ENCODE measurements at regions of chr2 and their contacts with region 1.

Region 1: DNA sequence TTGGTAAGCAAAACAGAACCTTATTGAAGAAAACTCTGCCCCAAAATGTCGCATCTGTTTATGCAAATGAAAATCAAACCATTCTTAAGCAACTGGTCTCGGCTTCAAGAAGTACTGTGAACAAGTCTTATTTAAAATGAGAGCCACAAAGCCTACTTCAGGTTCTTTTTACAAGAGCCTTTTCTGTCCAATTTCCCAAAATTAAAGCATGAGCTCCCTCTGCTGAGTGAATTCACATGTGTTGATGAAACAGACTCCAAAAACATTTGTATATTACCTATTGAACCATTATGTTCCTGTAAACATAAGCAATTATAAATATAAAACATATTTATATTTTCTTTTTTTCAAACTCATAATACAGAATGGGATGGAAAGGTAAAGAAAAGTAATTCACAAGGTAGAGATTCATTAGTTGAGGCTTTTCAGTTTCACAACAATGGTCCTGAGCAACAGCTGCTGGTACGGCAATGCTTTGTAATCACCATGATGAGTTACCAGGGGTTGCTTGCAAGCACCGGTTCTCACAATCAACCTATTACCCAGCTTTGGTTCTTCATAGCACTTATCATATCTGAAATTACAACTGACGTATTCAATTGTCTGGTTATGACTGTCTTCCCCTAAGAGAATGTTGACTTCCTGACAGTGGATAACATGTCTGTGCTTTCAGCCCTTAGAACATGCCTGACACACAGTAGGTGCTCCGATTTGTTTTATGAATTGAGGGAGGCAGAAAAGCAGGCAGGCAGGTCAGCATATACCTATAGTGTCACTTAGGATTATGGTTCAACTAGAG is 108.4 kb upstream of the BZW1 start:
- DNase-seq: peak; percentile 68
- H3K4me3 Mint-ChIP-seq: peak overlapping the region; percentile 19
- H3K27ac Mint-ChIP-seq: peak overlapping the region; percentile 83
- H3K4me1 Mint-ChIP-seq: peaks cover 55% of the 10 kb centered on the region
- H3K27me3 Mint-ChIP-seq: peaks cover 1% of the 10 kb centered on the region

Region 2: DNA sequence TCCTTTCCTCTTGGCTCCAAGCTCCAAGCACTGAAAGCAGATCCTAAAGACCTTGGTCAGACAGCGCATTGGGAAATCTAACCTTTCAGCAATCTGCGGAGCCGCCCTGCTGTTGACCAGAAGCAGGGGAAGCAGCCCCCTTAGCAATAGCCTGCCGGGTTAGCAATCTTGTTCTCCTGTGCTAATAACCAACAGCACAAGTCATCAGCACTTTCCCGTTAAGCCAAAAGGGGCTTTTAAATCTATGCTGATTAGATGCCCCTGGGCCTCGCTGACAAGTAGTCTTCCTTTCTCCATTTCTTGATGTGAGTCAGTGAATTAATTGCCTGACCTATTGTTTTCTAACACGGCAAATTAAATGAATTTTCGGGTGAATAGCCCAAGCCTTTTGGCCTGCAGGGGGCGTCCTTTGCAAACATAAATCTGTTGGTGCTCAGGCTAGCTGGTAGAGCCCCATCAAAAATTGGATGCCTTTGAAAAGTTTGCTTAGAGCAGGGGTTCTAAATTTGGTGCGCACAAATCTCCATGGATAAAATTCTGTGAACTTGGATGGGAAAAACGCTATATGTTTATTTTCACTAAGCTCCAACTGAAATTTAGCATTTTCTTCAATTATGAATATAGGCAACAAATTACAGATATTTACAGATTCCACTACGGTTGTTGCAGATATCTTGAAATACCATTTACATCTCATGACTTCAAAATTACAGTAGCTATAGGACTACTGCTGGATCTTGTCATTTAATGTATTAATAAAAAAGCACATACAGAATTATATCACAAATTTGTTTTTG is 723.3 kb before region 1 on chr2:
- CTCF ChIA-PET with region 1: interaction called, 3 read pairs
- intact Hi-C with region 1: loop called (anchors 1 kb)
- DNase-seq: peak; percentile 92
- H3K4me3 Mint-ChIP-seq: no peak overlapping the region
- H3K27ac Mint-ChIP-seq: peak overlapping the region; percentile 14
- H3K4me1 Mint-ChIP-seq: peaks cover 22% of the 10 kb centered on the region
- H3K27me3 Mint-ChIP-seq: no peaks in the 10 kb centered on the region

Region 3: DNA sequence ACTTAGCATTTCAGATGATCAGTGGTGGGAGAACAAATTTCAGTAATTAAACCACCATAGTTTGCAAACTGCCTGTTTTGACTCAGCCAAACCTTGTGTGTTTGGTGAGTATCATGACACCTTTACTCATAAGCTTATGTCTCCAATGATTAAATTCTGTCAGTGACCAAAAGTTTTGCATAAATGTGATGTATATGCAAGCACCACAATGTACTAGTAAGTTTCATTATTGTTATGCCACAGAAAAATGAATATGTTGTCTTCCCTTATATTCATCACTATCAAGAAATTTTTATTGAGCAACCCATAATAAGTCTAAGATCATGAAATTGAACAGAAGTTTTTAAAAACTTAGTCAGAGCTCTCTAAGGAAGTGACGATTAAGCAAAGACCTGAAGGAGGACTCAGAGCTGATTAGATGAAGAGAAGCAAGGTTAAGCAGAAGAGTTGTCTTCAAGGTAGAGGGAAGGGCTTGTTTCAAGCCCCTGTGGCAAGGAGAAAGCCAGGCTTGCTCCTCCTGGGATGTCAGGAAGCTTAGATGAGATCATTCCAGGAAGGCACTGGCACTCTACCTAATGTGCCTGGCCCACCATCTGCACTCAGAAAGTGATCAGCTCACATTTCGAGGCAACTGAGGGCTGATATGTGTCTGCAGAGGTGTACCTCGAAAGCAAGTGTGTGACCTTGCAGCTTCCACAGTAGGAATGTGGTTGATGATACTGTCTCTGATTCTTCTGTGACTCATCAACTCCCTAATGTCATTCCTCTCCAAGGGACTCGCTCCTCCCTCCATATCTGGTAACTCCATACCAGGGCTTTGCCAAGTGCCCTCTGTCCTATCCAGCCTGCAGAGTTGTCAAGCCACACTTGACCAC is 248.2 kb before region 1 on chr2:
- CTCF ChIA-PET with region 1: no interaction called
- intact Hi-C with region 1: loop called (anchors 1 kb)
- DNase-seq: no peak
- H3K4me3 Mint-ChIP-seq: no peak overlapping the region
- H3K27ac Mint-ChIP-seq: peak overlapping the region; percentile 73
- H3K4me1 Mint-ChIP-seq: peaks cover 30% of the 10 kb centered on the region
- H3K27me3 Mint-ChIP-seq: no peaks in the 10 kb centered on the region

Region 4: DNA sequence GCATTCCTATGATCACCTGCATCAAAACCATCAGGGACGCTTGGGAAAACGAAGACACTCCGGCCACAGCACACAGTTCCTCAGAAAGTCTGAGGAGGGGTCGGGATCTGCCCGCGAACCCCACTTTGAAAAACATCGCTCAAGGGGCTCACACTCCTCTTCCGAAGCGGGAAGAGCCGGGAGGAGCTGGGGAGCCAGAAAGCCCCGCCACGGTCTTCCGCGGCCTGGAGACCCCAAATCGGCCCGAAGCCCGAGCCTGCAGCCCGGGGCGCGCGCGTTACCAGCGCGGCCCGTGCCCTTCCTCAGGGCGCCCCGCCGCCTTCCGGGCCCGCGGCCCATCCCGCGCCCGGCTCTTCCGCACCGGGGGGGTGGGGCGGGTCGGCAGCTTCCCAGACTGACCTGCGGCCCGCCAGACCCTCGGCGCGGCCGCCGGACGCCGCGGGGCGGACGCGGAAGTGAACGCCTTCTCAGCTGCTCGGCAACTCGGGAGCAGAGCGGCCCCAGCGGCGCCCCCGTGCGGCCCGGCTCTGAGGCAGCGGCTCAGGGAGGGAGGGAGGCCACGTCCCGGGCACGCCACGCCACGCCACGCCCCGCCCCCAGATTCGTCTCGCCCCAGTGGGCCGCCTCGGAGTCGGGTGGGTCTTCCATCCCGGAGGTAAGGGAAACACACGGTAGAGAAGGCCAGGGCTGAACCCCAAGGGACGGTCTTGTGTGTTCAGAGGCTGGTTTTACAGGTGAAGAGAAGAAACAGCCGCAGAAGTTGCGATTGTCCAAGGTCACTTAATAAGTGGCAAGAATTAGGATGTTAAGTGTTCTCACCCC is 193.5 kb before region 1 on chr2 and contains the start of gene KCTD18:
- CTCF ChIA-PET with region 1: interaction called, 3 read pairs
- intact Hi-C with region 1: loop called (anchors 5 kb)
- DNase-seq: peak; percentile 92
- H3K4me3 Mint-ChIP-seq: peak within 1 kb of the TSS; percentile 94
- H3K27ac Mint-ChIP-seq: peak within 1 kb of the TSS; percentile 79
- H3K4me1 Mint-ChIP-seq: peaks cover 16% of the 10 kb centered on the region
- H3K27me3 Mint-ChIP-seq: no peaks in the 10 kb centered on the region
- total RNA-seq, gene KCTD18: 8.7 to 10.0 TPM

Region 5: GRCh38 chr2:200578778-200579177 is 124.5 kb before region 1 on chr2:
- CTCF ChIA-PET with region 1: interaction called, 6 read pairs
- intact Hi-C with region 1: loop called (anchors 1 kb)
- DNase-seq: peak; percentile 18
- H3K4me3 Mint-ChIP-seq: no peak overlapping the region
- H3K27ac Mint-ChIP-seq: peak overlapping the region; percentile 16
- H3K4me1 Mint-ChIP-seq: peaks cover 14% of the 10 kb centered on the region
- H3K27me3 Mint-ChIP-seq: no peaks in the 10 kb centered on the region

Region 6: DNA sequence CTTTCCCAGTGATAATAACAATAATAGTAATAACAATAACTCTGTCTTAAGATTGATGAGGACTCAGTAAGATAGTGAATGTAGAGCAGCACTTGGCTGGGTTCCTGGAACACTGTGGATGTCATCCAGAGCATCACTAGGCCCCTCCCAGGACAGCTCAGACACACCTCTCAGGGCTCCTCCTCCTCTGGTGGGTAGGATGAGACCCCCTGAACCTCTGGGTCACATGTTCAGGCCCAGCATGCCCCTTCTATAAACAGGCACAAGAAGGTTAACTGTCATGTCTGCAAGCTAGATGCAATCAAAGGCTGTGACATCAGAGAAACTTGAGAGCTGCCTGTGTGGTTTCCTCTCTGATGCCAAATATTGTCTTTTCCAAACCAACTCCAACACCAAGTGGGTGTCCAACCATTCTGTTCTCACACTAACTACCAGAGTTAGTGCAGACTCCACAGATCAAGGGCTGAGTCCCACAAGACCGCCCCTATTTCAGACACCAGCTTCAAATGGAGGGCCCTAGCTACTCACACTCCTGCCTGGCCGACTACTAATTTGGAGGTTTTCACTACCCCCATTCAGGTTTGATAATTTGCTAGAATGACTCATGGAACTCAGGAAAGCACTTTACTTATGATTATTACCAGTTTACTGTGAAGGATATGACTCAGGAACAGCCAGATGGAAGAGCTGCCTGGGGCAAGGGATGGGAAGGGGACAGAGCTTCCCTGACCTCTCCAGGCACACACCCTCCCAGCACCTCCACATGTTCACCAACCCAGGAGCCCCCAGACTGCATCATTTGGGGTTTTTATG is 62.0 kb after region 1 on chr2:
- CTCF ChIA-PET with region 1: no interaction called
- intact Hi-C with region 1: loop called (anchors 1 kb)
- DNase-seq: peak; percentile 70
- H3K4me3 Mint-ChIP-seq: peak overlapping the region; percentile 32
- H3K27ac Mint-ChIP-seq: peak overlapping the region; percentile 92
- H3K4me1 Mint-ChIP-seq: peaks cover 27% of the 10 kb centered on the region
- H3K27me3 Mint-ChIP-seq: no peaks in the 10 kb centered on the region

Region 7: DNA sequence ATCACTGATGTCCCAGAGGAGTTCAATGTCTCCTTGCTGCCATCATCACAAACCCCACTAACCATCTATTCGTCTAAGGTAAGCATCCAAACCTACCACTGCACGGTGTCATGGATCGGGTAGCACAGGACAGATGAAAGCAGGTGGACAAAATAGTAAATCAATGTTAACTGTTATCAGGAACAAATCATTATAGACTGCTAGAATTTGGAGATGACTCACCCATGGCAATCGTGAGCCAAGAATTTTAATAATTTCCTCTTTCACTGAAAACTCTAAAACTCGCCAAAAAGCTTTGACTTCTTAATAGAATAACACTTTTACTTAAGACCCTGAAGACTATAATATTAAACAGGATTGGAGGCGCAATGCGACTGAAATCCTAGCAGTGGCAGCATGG is 74.7 kb after region 1 on chr2:
- CTCF ChIA-PET with region 1: no interaction called
- intact Hi-C with region 1: no loop called
- DNase-seq: no peak
- H3K4me3 Mint-ChIP-seq: no peak overlapping the region
- H3K27ac Mint-ChIP-seq: no peak overlapping the region
- H3K4me1 Mint-ChIP-seq: no peaks in the 10 kb centered on the region
- H3K27me3 Mint-ChIP-seq: no peaks in the 10 kb centered on the region

Region 8: DNA sequence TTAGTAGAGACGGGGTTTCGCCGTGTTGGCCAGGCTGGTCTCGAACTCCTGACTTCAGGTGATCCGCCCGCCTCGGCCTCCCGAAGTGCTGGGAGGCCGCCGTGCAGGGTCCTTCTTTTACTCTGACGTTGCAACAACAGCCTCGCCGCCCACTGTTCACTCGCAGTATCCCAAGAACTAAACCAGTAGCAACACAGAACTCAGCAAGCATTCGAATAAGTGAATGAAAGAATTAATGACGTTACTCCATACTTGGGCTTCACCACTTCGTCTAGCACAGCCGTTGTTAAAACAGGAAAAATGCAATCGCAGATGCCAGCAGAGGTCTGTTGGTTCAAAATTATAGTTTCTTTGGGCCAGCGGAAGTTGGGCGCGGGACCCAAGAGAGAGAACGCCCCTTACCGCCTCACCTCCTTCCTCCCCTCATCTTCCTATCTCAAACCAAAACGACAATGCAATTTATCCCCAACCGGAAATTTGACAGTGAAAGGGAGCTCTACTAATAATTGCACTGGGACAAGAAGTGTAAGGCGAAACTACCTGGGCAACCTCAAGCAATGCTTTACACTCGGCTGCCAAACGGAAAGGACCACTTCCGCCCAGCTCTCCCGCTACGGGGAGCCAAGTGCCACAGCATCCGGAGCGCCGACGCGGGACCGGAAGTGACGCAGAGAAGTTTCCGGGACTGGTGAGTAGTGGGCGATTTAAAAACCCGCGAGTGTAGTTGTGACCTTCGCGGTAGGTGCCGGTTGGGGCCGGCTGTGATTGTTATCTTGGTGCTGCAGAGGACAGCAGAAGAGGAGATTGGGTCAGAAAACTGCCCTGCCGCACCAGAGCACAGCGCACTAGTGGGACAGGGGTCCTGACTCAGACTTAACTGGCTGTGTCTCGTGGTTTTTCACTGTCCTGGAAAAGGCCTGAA is 185.6 kb after region 1 on chr2 and contains the starts of genes NIF3L1 and PPIL3:
- CTCF ChIA-PET with region 1: interaction called, 3 read pairs
- intact Hi-C with region 1: loop called (anchors 1 kb)
- DNase-seq: peak; percentile 99
- H3K4me3 Mint-ChIP-seq: peak within 1 kb of the TSS; percentile 88
- H3K27ac Mint-ChIP-seq: peak within 1 kb of the TSS; percentile 97
- H3K4me1 Mint-ChIP-seq: peaks cover 50% of the 10 kb centered on the region
- H3K27me3 Mint-ChIP-seq: no peaks in the 10 kb centered on the region
- total RNA-seq, gene NIF3L1: 31.6 to 33.3 TPM
- total RNA-seq, gene PPIL3: 81.3 to 82.2 TPM

Region 9: GRCh38 chr2:201007561-201007998 is 304.3 kb after region 1 on chr2:
- CTCF ChIA-PET with region 1: no interaction called
- intact Hi-C with region 1: no loop called
- DNase-seq: no peak
- H3K4me3 Mint-ChIP-seq: no peak overlapping the region
- H3K27ac Mint-ChIP-seq: no peak overlapping the region
- H3K4me1 Mint-ChIP-seq: no peaks in the 10 kb centered on the region
- H3K27me3 Mint-ChIP-seq: no peaks in the 10 kb centered on the region